A673 (cell line): ENCODE measurements at regions of chr1 and their contacts with region 1.

Region 1: GRCh38 chr1:179121159-179121938 is 39.5 kb downstream of the TOR3A start:
- DNase-seq: peak; percentile 68
- H3K4me3 ChIP-seq: no peak overlapping the region
- H3K27ac ChIP-seq: no peak overlapping the region
- H3K4me1 ChIP-seq: no peaks in the 10 kb centered on the region
- H3K27me3 ChIP-seq: no peaks in the 10 kb centered on the region
- CTCF ChIP-seq: peak; percentile 76

Region 2: DNA sequence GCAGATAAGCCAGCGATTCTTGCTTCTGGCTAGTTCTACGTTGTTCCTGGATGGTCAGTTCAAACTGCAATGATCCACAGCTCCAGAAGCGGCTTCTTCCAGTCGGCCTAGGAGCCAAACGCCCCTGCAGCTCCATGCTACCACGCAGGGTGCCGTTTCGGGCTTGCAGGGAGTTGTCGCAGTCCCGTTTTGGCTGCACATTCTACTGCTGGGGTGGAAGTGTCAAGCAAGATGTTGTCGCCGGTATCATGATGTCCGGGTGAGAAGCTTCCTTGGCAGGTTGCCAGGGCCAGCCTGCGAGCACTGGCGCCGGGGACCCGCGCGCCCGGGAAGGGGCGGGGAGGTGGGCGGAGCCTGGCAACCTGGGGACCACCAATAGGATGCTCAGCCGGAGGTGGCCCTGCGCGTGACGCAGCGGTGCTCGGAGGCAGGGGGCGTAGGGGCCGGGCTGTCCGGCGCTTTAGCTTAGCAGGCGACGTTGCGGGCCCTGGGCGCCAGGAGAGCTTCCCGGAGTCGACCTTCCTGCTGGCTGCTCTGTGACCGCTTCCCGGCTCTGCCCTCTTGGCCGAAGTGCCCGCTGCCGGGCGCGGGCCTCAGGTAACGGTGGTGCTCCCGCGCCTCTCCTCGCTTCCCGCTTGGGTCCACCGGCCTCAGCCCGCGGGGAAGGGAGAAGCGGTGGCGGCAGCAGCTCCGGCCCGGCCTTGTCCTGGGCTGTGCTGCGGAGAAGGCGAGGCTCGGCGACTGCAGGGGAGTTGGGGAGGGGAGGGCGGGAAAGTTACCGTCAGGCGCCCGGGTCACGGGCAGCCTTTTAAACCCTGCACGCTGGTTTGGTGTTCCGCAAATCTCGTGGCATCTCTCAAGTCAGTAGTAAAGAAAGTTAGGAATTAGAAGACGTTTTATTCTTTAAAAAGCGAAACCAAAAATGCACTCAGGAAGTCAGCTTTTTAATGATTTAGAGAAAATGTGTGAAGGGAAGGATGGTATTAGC is 172.3 kb after region 1 on chr1 and contains the start of gene SOAT1:
- CTCF ChIA-PET with region 1: interaction called, 4 read pairs
- POLR2A ChIA-PET with region 1: no interaction called
- intact Hi-C with region 1: loop called (anchors 2 kb)
- DNase-seq: peak; percentile 95
- H3K4me3 ChIP-seq: peak within 1 kb of the TSS; percentile 66
- H3K27ac ChIP-seq: peak within 1 kb of the TSS; percentile 83
- H3K4me1 ChIP-seq: peaks cover 9% of the 10 kb centered on the region
- H3K27me3 ChIP-seq: no peaks in the 10 kb centered on the region
- CTCF ChIP-seq: no peak
- total RNA-seq, gene SOAT1: 49.9 and 53.0 TPM in 2 replicates